ENCODE measurements at regions of chr1 and their contacts with region 1.

Region 1: GRCh38 chr1:98949621-98950020 is 55.0 kb downstream of the PLPPR5 start:
- DNase-seq: no peak
- H3K4me3 ChIP-seq: no peak overlapping the region
- H3K27ac ChIP-seq: no peak overlapping the region
- H3K4me1 ChIP-seq: no peaks in the 10 kb centered on the region
- CTCF ChIP-seq: no peak

Region 2: DNA sequence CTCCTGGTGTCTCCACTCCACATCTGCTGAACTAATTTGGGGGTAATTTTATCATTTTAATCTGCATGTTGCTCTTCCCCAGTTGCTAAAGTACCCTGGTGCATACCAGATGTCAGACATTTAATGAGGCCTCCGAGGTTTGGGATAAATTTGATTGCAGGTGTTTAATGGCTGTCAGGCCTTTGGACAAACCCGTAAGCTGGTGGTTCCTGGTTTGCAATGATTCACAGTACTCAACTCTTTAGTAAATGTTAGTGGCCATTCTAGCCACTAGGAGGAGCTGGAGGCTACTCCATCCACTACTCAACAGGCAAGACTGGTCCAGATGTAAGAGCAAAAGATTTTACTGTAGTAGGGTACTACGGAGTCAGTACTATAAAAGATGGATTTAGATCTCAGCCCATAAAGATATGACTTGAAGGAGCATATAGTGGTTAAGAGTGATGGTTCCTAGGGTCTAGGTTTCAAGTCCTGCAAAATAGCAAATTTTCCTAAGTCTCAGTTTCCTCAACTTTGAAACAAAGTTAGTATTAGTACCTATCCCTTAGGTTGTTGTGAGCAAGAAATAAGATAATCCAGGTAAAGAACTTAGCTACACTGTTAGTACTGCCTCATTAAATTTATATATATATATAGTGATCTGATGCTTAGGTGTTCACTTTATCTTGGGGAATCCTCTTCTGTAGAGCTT is 155.3 kb before region 1 on chr1:
- CTCF ChIA-PET with region 1: no interaction called
- POLR2A ChIA-PET with region 1: no interaction called
- intact Hi-C with region 1: loop called (anchors 10 kb)
- DNase-seq: peak; percentile 58
- H3K4me3 ChIP-seq: no peak overlapping the region
- H3K27ac ChIP-seq: no peak overlapping the region
- H3K4me1 ChIP-seq: no peaks in the 10 kb centered on the region
- CTCF ChIP-seq: peak; percentile 87

Region 3: GRCh38 chr1:99062192-99062591 is 112.6 kb after region 1 on chr1:
- CTCF ChIA-PET with region 1: no interaction called
- POLR2A ChIA-PET with region 1: no interaction called
- intact Hi-C with region 1: no loop called
- DNase-seq: no peak
- H3K4me3 ChIP-seq: no peak overlapping the region
- H3K27ac ChIP-seq: no peak overlapping the region
- H3K4me1 ChIP-seq: no peaks in the 10 kb centered on the region
- CTCF ChIP-seq: no peak